K562 (cell line): ENCODE measurements at regions of chr17 and their contacts with region 1.

Region 1: DNA sequence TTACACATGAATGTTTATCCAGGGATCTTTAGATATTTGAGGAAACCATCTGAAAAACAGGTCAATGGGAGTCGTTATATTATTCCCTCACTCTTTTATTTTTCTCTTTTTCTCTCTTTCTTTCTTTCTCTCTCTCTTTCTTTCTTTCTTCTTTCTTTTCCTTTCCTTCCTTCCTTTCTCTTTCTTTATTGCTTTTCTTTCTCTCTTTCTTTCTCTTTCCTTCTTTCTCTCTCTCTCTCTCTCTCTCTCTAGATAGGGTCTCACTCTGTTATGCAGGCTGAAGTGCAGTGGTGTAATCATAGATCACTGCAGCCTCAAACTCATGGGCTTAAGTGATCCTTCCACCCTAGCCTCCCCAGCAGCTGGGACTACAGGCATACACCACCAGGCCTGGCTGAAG is 20.3 kb upstream of the OR4D1 start:
- DNase-seq: no peak
- ATAC-seq: no peak
- H3K4me3 ChIP-seq: no peak overlapping the region
- H3K27ac ChIP-seq: no peak overlapping the region
- H3K4me1 ChIP-seq: no peaks in the 10 kb centered on the region
- H3K27me3 ChIP-seq: peaks cover 4 to 8% of the 10 kb centered on the region in 2 experiments; a peak in 3 of 5 replicates
- CTCF ChIP-seq: no peak
- EP300 ChIP-seq: no peak
- POLR2A ChIP-seq: no peak
- RAD21 ChIP-seq: no peak

Region 2: DNA sequence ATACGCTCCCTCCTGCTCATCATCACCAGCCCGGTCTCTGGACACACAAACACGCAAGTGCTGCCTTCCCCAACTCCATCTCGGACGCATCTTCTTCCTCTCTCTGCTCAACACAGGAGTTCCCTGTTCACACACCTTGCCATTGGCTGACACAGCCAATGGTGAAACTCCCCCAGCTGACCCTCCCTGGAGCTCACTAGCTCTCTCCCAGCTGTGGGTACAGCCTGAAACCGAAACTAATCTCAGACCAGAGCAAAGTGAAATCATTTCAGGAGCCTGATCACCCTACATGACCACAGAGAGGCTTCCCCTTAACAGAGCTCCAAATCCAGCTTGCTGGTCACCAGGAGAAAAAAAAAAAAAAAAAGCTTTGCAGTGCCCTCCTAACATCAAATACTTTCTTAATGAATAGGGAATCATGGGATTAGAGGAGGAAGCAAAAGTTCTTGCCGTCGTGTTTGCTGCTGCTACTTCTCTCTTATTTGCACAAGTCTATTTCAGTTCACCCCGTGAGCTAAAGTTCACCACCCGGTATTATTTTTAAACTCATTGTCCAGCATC is 181.0 kb before region 1 on chr17:
- CTCF ChIA-PET with region 1: no interaction called
- POLR2A ChIA-PET with region 1: no interaction called
- in situ Hi-C with region 1: no loop called
- intact Hi-C with region 1: no loop called
- DNase-seq: peak in 2 of 4 experiments; percentile 46 to 53
- ATAC-seq: peak; percentile 62
- H3K4me3 ChIP-seq: no peak overlapping the region
- H3K27ac ChIP-seq: no peak overlapping the region
- H3K4me1 ChIP-seq: peaks cover 12 to 34% of the 10 kb centered on the region in 2 experiments; a peak in 4 of 5 replicates
- H3K27me3 ChIP-seq: peaks cover 0 to 3% of the 10 kb centered on the region in 2 experiments; a peak in 2 of 5 replicates
- CTCF ChIP-seq: no peak
- EP300 ChIP-seq: no peak
- POLR2A ChIP-seq: no peak
- RAD21 ChIP-seq: no peak

Region 3: DNA sequence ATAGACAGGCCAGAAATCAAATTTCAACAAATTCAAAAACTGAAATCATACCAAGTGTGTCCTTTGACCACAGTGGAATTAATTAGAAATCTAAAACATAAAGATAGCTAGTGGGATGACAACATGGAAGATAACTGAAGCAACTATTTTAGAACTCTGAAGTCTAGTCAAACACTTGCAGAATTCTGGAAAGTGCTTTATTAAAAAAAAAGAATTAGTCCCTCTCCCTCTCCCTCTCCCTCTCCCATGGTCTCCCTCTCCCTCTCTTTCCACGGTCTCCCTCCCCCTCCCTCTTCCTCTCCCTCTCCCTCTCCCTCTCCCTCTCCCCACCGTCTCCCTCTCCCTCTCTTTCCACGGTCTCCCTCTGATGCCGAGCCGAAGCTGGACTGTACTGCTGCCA is 13.6 kb after region 1 on chr17:
- CTCF ChIA-PET with region 1: no interaction called
- POLR2A ChIA-PET with region 1: no interaction called
- in situ Hi-C with region 1: no loop called
- intact Hi-C with region 1: no loop called
- DNase-seq: no peak
- ATAC-seq: no peak
- H3K4me3 ChIP-seq: no peak overlapping the region
- H3K27ac ChIP-seq: no peak overlapping the region
- H3K4me1 ChIP-seq: no peaks in the 10 kb centered on the region
- H3K27me3 ChIP-seq: peaks cover 5 to 11% of the 10 kb centered on the region in 2 experiments; a peak in 4 of 5 replicates
- CTCF ChIP-seq: no peak
- EP300 ChIP-seq: no peak
- POLR2A ChIP-seq: no peak
- RAD21 ChIP-seq: no peak

Region 4: DNA sequence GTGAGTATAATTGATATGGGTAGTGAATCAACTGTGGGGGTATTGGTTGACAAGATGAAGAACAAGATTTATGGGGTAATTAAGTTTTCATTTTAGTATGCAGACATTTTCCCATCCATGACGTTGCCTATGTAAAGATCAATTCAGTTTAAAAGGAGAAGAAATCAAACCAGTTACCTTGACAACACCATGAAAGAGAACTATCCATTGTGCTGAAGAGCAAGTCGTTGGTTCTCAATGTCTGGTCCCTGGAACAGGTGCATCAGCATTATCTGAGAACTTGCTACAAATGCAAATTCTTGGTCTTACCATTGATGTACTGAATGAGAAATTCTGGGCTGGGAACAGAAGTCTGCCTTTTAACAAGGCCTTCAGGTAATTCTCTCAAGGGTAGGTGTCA is 38.1 kb after region 1 on chr17:
- CTCF ChIA-PET with region 1: no interaction called
- POLR2A ChIA-PET with region 1: interaction called, 3 read pairs
- in situ Hi-C with region 1: loop called (anchors 5 kb)
- intact Hi-C with region 1: no loop called
- DNase-seq: no peak
- ATAC-seq: no peak
- H3K4me3 ChIP-seq: no peak overlapping the region
- H3K27ac ChIP-seq: no peak overlapping the region
- H3K4me1 ChIP-seq: no peaks in the 10 kb centered on the region
- H3K27me3 ChIP-seq: peaks cover 21 to 38% of the 10 kb centered on the region in 2 experiments
- CTCF ChIP-seq: no peak
- EP300 ChIP-seq: no peak
- POLR2A ChIP-seq: no peak
- RAD21 ChIP-seq: no peak

Region 5: DNA sequence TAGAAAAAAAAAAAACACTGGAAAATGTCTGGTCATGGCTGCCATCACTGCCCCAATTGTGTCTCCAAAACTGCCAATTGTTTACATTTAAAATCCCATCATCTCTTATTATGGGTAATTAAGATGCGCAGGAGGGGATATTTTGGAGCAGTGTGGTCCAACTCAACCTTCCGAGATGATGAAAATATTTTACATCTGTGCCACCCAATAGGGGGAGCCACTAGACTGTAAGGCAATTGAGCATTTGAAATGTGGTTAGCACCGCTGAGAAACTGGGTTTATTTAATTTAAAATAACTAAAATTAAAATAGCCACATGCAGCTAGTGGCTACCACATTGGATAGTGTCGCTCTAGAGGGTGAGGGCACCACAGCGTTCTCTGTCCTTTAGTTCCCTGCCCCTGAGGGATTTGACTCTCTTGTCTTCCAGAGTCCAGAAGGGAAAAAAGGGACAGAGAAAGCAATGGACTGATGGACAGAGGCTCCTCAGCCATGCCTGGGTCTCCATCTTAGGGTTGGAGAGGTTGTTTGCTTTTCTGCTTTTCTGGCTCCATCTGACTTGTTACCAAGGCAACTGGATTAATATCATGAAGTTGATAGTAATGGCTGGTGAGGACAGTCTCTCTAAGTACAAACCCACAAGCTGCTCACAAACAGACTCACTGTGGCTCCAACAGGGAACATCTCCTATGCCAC is 149.4 kb after region 1 on chr17:
- CTCF ChIA-PET with region 1: no interaction called
- POLR2A ChIA-PET with region 1: no interaction called
- in situ Hi-C with region 1: no loop called
- intact Hi-C with region 1: no loop called
- DNase-seq: peak; percentile 63 to 69 (median 64)
- ATAC-seq: peak; percentile 71
- H3K4me3 ChIP-seq: no peak overlapping the region
- H3K27ac ChIP-seq: no peak overlapping the region
- H3K4me1 ChIP-seq: peaks cover 5 to 21% of the 10 kb centered on the region in 2 experiments; a peak in 3 of 5 replicates
- H3K27me3 ChIP-seq: peaks cover 30 to 78% of the 10 kb centered on the region in 2 experiments; a peak in 4 of 5 replicates
- CTCF ChIP-seq: peak; percentile 59 to 79 (median 66)
- EP300 ChIP-seq: no peak
- POLR2A ChIP-seq: no peak
- RAD21 ChIP-seq: peak; percentile 56 to 73